Dendritic cell treated with granulocyte-macrophage colony-stimulating factor and Interleukin-4, amounts not matched to agents 40 ng/mL and 50 ng/mL, for 4 days (primary cell): ENCODE measurements at regions of chr11 and their contacts with region 1.

Region 1: GRCh38 chr11:18634140-18635032 is at the start of gene SPTY2D1:
- H3K4me3 Mint-ChIP-seq: peak within 1 kb of the TSS; percentile 82
- H3K27ac Mint-ChIP-seq: peak within 1 kb of the TSS; percentile 98
- H3K4me1 Mint-ChIP-seq: peaks cover 14% of the 10 kb centered on the region
- H3K27me3 Mint-ChIP-seq: peaks cover 10% of the 10 kb centered on the region

Region 2: GRCh38 chr11:18321980-18322711 is 312.2 kb before region 1 on chr11 and contains the starts of genes GTF2H1 and HPS5:
- intact Hi-C with region 1: loop called (anchors 5 kb)
- H3K4me3 Mint-ChIP-seq: peak within 1 kb of the TSS; percentile 92
- H3K27ac Mint-ChIP-seq: peak within 1 kb of the TSS; percentile 98
- H3K4me1 Mint-ChIP-seq: peaks cover 71% of the 10 kb centered on the region
- H3K27me3 Mint-ChIP-seq: no peaks in the 10 kb centered on the region

Region 3: GRCh38 chr11:18526521-18527296 is 107.7 kb before region 1 on chr11 and contains the start of gene TSG101:
- intact Hi-C with region 1: loop called (anchors 2 kb)
- H3K4me3 Mint-ChIP-seq: peak within 1 kb of the TSS; percentile 99
- H3K27ac Mint-ChIP-seq: peak within 1 kb of the TSS; percentile 99
- H3K4me1 Mint-ChIP-seq: peaks cover 21% of the 10 kb centered on the region
- H3K27me3 Mint-ChIP-seq: no peaks in the 10 kb centered on the region

Region 4: DNA sequence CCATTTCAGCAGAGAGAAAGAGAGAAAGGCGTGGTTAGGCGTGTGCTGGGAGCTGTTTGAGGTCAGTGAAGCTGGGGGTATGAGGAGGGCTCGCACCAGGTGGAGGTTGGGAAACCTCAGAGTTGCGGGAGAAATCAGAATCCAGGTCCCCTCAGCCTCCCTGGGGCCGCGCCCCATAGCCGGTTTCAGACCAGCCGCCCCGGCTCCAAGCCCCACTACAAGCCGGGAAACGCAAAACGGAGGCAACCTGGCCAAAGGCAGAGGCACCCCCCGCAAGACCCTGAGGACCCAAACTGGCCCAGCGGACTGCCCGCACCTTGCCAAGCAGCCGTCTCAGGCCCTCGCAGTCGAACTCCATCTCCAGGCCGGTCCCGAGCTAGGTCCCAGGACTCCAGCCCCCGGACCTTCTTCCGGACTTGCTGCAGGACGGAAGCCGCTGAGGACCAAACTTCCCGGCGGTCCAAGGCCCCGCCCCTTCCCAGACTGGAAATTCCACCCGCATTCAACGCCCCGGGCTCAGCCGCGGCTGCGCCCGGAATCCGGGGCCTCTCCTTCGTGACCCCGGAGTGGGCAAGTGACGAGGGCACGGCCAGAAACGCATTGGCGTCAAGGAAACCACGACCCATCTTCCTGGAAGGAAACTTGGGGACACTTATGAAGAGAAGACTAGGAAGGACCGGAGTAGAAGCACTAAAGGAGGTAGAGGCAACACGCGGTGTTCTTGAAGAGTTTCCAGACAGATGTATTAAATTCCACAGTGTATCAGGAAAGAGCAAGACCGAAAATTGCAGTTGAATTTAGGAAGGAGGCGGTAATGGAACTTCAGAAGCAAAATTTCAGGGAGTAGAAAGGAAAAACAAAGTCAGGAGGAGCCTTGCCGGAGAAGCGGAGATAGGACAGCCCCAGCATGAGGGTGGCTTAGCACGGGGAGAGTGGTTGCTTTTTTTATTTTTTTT is 45.8 kb before region 1 on chr11 and contains the start of gene UEVLD:
- intact Hi-C with region 1: loop called (anchors 2 kb)
- H3K4me3 Mint-ChIP-seq: no peak within 1 kb of the TSS
- H3K27ac Mint-ChIP-seq: no peak within 1 kb of the TSS
- H3K4me1 Mint-ChIP-seq: peaks cover 5% of the 10 kb centered on the region
- H3K27me3 Mint-ChIP-seq: no peaks in the 10 kb centered on the region

Region 5: GRCh38 chr11:18615628-18616392 is 18.6 kb before region 1 on chr11:
- intact Hi-C with region 1: loop called (anchors 1 kb)
- H3K4me3 Mint-ChIP-seq: peak overlapping the region; percentile 7
- H3K27ac Mint-ChIP-seq: peak overlapping the region; percentile 64
- H3K4me1 Mint-ChIP-seq: peaks cover 25% of the 10 kb centered on the region
- H3K27me3 Mint-ChIP-seq: peaks cover 12% of the 10 kb centered on the region

Region 6: GRCh38 chr11:18698341-18699268 is 64.2 kb after region 1 on chr11 and contains the start of gene TMEM86A:
- intact Hi-C with region 1: loop called (anchors 1 kb)
- H3K4me3 Mint-ChIP-seq: peak within 1 kb of the TSS; percentile 86
- H3K27ac Mint-ChIP-seq: peak within 1 kb of the TSS; percentile 90
- H3K4me1 Mint-ChIP-seq: peaks cover 69% of the 10 kb centered on the region
- H3K27me3 Mint-ChIP-seq: peaks cover 17% of the 10 kb centered on the region